ENCODE measurements at regions of chrX and their contacts with region 1.

Region 1: GRCh38 chrX:70196961-70197805 is 19.9 kb downstream of the DGAT2L6 start:
- DNase-seq: peak; percentile 60 to 74 (median 71)
- ATAC-seq: peak; percentile 96
- H3K4me3 ChIP-seq: no peak overlapping the region
- H3K27ac ChIP-seq: no peak overlapping the region
- H3K4me1 ChIP-seq: no peaks in the 10 kb centered on the region
- H3K27me3 ChIP-seq: peaks cover 0 to 19% of the 10 kb centered on the region in 2 experiments; a peak in 2 of 5 replicates
- CTCF ChIP-seq: peak; percentile 72 to 76 (median 74)
- EP300 ChIP-seq: no peak
- POLR2A ChIP-seq: no peak
- RAD21 ChIP-seq: peak; percentile 64 to 75

Region 2: GRCh38 chrX:70183091-70183490 is 14.1 kb before region 1 on chrX:
- CTCF ChIA-PET with region 1: no interaction called
- POLR2A ChIA-PET with region 1: no interaction called
- in situ Hi-C with region 1: no loop called
- intact Hi-C with region 1: no loop called
- DNase-seq: no peak
- ATAC-seq: no peak
- H3K4me3 ChIP-seq: no peak overlapping the region
- H3K27ac ChIP-seq: no peak overlapping the region
- H3K4me1 ChIP-seq: no peaks in the 10 kb centered on the region
- H3K27me3 ChIP-seq: no peaks in the 10 kb centered on the region; a peak in 1 of 5 replicates
- CTCF ChIP-seq: no peak
- EP300 ChIP-seq: no peak
- POLR2A ChIP-seq: no peak
- RAD21 ChIP-seq: no peak

Region 3: DNA sequence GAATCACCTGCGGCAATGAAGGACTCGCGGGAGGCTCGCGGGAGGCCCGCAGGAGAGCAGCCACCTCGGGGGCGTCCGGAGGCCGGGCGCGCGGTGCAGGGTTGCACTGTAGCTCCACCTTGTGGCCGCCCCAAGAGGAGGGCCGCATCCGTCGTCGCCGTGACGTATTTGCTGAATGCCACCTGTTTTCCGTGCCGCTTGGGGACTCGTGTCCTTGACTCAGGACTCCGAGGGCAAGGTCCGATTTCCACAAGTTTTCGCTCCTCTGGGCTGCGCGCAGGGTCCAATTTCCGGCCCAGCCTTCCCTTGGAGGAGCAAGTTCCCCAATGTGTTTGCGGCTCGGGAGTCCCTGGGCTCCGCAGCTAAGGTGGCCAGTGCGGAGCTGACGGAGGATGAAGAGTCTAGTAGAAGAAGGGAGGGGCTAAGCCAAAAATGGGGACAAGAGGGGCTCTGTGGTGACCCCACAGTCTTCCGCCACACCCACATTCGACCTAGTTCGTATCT is 236.7 kb after region 1 on chrX:
- CTCF ChIA-PET with region 1: no interaction called
- POLR2A ChIA-PET with region 1: no interaction called
- in situ Hi-C with region 1: no loop called
- intact Hi-C with region 1: loop called (anchors 1 kb)
- DNase-seq: peak; percentile 79 to 84 (median 80)
- ATAC-seq: peak; percentile 89
- H3K4me3 ChIP-seq: peak overlapping the region; percentile 75
- H3K27ac ChIP-seq: peak overlapping the region; percentile 79
- H3K4me1 ChIP-seq: peaks cover 12 to 16% of the 10 kb centered on the region in 2 experiments; a peak in 4 of 5 replicates
- H3K27me3 ChIP-seq: peaks cover 2 to 11% of the 10 kb centered on the region in 2 experiments; a peak in 2 of 5 replicates
- CTCF ChIP-seq: peak; percentile 77 to 81 (median 81)
- EP300 ChIP-seq: no peak
- POLR2A ChIP-seq: peak; percentile 55
- RAD21 ChIP-seq: peak; percentile 43 to 64

Measured in K562 (cell line).